ENCODE measurements at regions of chr10 and their contacts with region 1.

Region 1: GRCh38 chr10:116787893-116788665 is 45.7 kb upstream of the HSPA12A start:
- DNase-seq: peak; percentile 72 to 81 (median 77)
- H3K4me3 ChIP-seq: peak overlapping the region in 1 of 2 donors; percentile 19
- H3K4me3 Mint-ChIP-seq: peak overlapping the region in 7 of 8 donors; percentile 53 to 79 (median 78)
- H3K27ac ChIP-seq: no peak overlapping the region
- H3K27ac Mint-ChIP-seq: peak overlapping the region; percentile 38 to 89 (median 80)
- H3K4me1 ChIP-seq: peaks cover 11% of the 10 kb centered on the region
- H3K4me1 Mint-ChIP-seq: peaks cover 4 to 18% (median 12%) of the 10 kb centered on the region in 4 donors
- H3K27me3 ChIP-seq: no peaks in the 10 kb centered on the region
- H3K27me3 Mint-ChIP-seq: peaks cover 10 to 18% of the 10 kb centered on the region in 2 donors

Region 2: GRCh38 chr10:116688241-116688711 is 99.8 kb before region 1 on chr10:
- CTCF ChIA-PET with region 1: interaction called, 118 read pairs
- POLR2A ChIA-PET with region 1: no interaction called
- intact Hi-C with region 1: no loop called
- DNase-seq: no peak
- H3K4me3 ChIP-seq: no peak overlapping the region
- H3K4me3 Mint-ChIP-seq: no peak overlapping the region
- H3K27ac ChIP-seq: no peak overlapping the region
- H3K27ac Mint-ChIP-seq: peak overlapping the region in 1 of 7 donors; percentile 77
- H3K4me1 ChIP-seq: no peaks in the 10 kb centered on the region
- H3K4me1 Mint-ChIP-seq: no peaks in the 10 kb centered on the region
- H3K27me3 ChIP-seq: no peaks in the 10 kb centered on the region
- H3K27me3 Mint-ChIP-seq: peaks cover 5 to 25% of the 10 kb centered on the region in 2 donors

Region 3: GRCh38 chr10:116771101-116771958 is 16.7 kb before region 1 on chr10:
- CTCF ChIA-PET with region 1: interaction called, 73 read pairs
- POLR2A ChIA-PET with region 1: interaction called, 3 read pairs
- intact Hi-C with region 1: no loop called
- DNase-seq: no peak
- H3K4me3 ChIP-seq: no peak overlapping the region
- H3K4me3 Mint-ChIP-seq: no peak overlapping the region
- H3K27ac ChIP-seq: no peak overlapping the region
- H3K27ac Mint-ChIP-seq: no peak overlapping the region
- H3K4me1 ChIP-seq: no peaks in the 10 kb centered on the region
- H3K4me1 Mint-ChIP-seq: no peaks in the 10 kb centered on the region
- H3K27me3 ChIP-seq: peaks cover 5% of the 10 kb centered on the region
- H3K27me3 Mint-ChIP-seq: peaks cover 14 to 23% of the 10 kb centered on the region in 2 donors

Region 4: DNA sequence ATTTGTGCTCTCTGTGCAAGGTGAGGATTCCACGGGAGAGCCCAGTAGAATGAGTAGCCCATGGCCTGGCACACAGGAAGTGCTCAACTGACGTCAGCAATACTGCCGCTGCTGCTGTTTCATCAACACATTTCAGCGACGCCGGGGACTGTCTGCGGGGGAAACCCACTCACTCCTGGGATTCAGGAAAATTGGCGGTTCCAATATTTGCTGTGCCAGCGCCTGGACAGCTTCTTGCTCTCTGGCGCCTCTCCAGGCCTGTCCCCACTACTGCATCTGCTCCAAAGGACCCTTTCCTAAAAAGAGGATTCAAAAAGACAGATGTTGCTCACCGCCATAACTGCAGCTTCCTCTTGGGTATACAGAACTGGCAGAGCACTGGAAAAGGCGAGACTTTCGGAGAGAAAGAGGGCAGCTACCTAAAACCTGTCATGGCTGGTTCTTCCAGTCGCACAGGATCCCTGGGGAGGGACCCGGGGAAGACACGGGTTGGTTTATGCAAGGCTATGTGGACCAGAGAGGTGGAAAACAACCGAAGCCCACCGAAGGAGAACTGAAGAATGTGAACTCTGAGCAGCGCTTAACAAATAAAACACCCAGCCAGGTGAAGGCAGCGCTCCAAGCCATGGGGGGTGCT is 21.5 kb after region 1 on chr10:
- CTCF ChIA-PET with region 1: interaction called, 13 read pairs
- POLR2A ChIA-PET with region 1: no interaction called
- intact Hi-C with region 1: no loop called
- DNase-seq: no peak
- H3K4me3 ChIP-seq: no peak overlapping the region
- H3K4me3 Mint-ChIP-seq: no peak overlapping the region
- H3K27ac ChIP-seq: no peak overlapping the region
- H3K27ac Mint-ChIP-seq: no peak overlapping the region
- H3K4me1 ChIP-seq: no peaks in the 10 kb centered on the region
- H3K4me1 Mint-ChIP-seq: no peaks in the 10 kb centered on the region
- H3K27me3 ChIP-seq: no peaks in the 10 kb centered on the region
- H3K27me3 Mint-ChIP-seq: peaks cover 11 to 14% of the 10 kb centered on the region in 2 donors